ENCODE measurements at regions of chr19 and their contacts with region 1.

Region 1: GRCh38 chr19:16168465-16169081 is 4.8 kb downstream of the CIB3 start:
- DNase-seq: no peak
- ATAC-seq: no peak

Region 2: DNA sequence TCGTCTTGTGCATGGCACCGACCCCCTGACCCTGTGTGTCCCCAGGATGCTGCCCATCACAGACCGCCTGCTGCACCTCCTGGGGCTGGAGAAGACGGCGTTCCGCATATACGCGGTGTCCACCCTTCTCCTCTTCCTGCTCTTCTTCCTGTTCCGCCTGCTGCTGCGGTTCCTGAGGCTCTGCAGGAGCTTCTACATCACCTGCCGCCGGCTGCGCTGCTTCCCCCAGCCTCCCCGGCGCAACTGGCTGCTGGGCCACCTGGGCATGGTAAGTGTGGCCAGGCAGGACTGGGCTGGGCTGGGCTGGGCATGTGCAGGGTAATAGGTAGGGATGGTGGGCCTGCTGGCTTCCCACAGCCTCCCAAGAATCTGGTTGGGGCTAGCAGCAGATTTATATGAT is 643.3 kb before region 1 on chr19:
- intact Hi-C with region 1: loop called (anchors 2 kb)
- DNase-seq: no peak
- ATAC-seq: no peak

Region 3: GRCh38 chr19:16244091-16244490 is 75.5 kb after region 1 on chr19:
- intact Hi-C with region 1: no loop called
- DNase-seq: no peak
- ATAC-seq: no peak

Measured in sciatic nerve (tissue), 2 donors.